ENCODE measurements at regions of chr10 and their contacts with region 1.

Region 1: GRCh38 chr10:3043512-3044368 is 23.6 kb upstream of the PFKP start:
- DNase-seq: peak; percentile 78
- ATAC-seq: peak; percentile 83
- H3K4me3 Mint-ChIP-seq: no peak overlapping the region
- H3K27ac Mint-ChIP-seq: no peak overlapping the region
- H3K4me1 Mint-ChIP-seq: peaks cover 6% of the 10 kb centered on the region
- H3K27me3 Mint-ChIP-seq: peaks cover 14% of the 10 kb centered on the region

Region 2: GRCh38 chr10:1737222-1738061 is 1306.3 kb before region 1 on chr10 and contains the start of gene ADARB2:
- CTCF ChIA-PET with region 1: no interaction called
- POLR2A ChIA-PET with region 1: no interaction called
- intact Hi-C with region 1: loop called in 1 of 2 experiments (anchors 10 kb)
- DNase-seq: peak; percentile 51
- ATAC-seq: peak; percentile 80
- H3K4me3 Mint-ChIP-seq: peak within 1 kb of the TSS; percentile 32
- H3K27ac Mint-ChIP-seq: no peak within 1 kb of the TSS
- H3K4me1 Mint-ChIP-seq: peaks cover 12% of the 10 kb centered on the region
- H3K27me3 Mint-ChIP-seq: peaks cover 68% of the 10 kb centered on the region
- total RNA-seq, gene ADARB2: not detected

Region 3: GRCh38 chr10:2619916-2620315 is 423.8 kb before region 1 on chr10:
- CTCF ChIA-PET with region 1: no interaction called
- POLR2A ChIA-PET with region 1: no interaction called
- intact Hi-C with region 1: loop called in 1 of 2 experiments (anchors 10 kb)
- DNase-seq: no peak
- ATAC-seq: no peak
- H3K4me3 Mint-ChIP-seq: no peak overlapping the region
- H3K27ac Mint-ChIP-seq: no peak overlapping the region
- H3K4me1 Mint-ChIP-seq: no peaks in the 10 kb centered on the region
- H3K27me3 Mint-ChIP-seq: peaks cover 7% of the 10 kb centered on the region

Region 4: DNA sequence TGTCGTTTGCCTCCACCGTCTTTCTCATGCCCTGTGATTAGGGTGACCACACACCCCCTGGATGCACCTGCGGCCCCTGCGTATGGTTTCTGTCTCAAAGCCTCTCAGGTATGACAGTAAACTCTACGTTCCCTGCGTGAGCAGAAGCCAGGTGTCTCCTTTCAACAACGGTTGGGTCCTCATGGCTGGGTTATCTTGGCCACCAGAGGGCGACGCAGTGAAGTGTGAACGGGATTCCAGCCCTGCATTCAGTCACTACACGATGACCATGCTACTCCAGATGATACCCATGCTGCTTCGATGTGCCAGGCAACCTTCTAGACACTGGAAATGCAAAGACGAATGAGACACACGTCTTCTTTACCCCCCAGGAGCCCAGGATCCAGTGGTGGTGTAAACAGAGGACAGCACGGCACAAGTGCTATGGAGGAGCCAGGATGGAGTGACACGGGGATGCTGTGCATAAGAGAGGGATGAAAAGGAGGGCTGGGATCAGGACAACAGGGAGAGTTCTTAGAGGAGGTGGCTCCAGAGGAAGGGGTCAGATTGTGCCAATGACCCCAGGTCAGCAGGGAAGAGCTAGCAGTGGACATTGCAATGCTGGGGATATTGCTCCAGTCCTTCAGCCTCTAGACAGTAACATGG is 204.5 kb before region 1 on chr10:
- CTCF ChIA-PET with region 1: interaction called, 6 read pairs
- POLR2A ChIA-PET with region 1: no interaction called
- intact Hi-C with region 1: loop called (anchors 1 to 5 kb)
- DNase-seq: peak; percentile 66
- ATAC-seq: no peak
- H3K4me3 Mint-ChIP-seq: no peak overlapping the region
- H3K27ac Mint-ChIP-seq: no peak overlapping the region
- H3K4me1 Mint-ChIP-seq: no peaks in the 10 kb centered on the region
- H3K27me3 Mint-ChIP-seq: peaks cover 14% of the 10 kb centered on the region

Region 5: GRCh38 chr10:2927958-2928840 is 115.5 kb before region 1 on chr10:
- CTCF ChIA-PET with region 1: interaction called, 26 read pairs
- POLR2A ChIA-PET with region 1: no interaction called
- intact Hi-C with region 1: loop called (anchors 1 kb)
- DNase-seq: peak; percentile 88
- ATAC-seq: peak; percentile 81
- H3K4me3 Mint-ChIP-seq: no peak overlapping the region
- H3K27ac Mint-ChIP-seq: no peak overlapping the region
- H3K4me1 Mint-ChIP-seq: peaks cover 5% of the 10 kb centered on the region
- H3K27me3 Mint-ChIP-seq: peaks cover 24% of the 10 kb centered on the region

Region 6: GRCh38 chr10:3028441-3028840 is 15.3 kb before region 1 on chr10:
- CTCF ChIA-PET with region 1: interaction called, 10 read pairs
- POLR2A ChIA-PET with region 1: no interaction called
- intact Hi-C with region 1: no loop called
- DNase-seq: no peak
- ATAC-seq: no peak
- H3K4me3 Mint-ChIP-seq: no peak overlapping the region
- H3K27ac Mint-ChIP-seq: no peak overlapping the region
- H3K4me1 Mint-ChIP-seq: peaks cover 3% of the 10 kb centered on the region
- H3K27me3 Mint-ChIP-seq: peaks cover 36% of the 10 kb centered on the region

Region 7: GRCh38 chr10:3095373-3096139 is 51.8 kb after region 1 on chr10:
- CTCF ChIA-PET with region 1: no interaction called
- POLR2A ChIA-PET with region 1: no interaction called
- intact Hi-C with region 1: no loop called
- DNase-seq: peak; percentile 80
- ATAC-seq: peak; percentile 86
- H3K4me3 Mint-ChIP-seq: peak overlapping the region; percentile 15
- H3K27ac Mint-ChIP-seq: peak overlapping the region; percentile 83
- H3K4me1 Mint-ChIP-seq: peaks cover 55% of the 10 kb centered on the region
- H3K27me3 Mint-ChIP-seq: no peaks in the 10 kb centered on the region

Measured in activated CD4-positive, alpha-beta T cell treated with anti-CD3 and anti-CD28 coated beads for 36 hours (primary cell).